ENCODE measurements at regions of chr4 and their contacts with region 1.

Region 1: GRCh38 chr4:113394730-113395530 is 345.5 kb downstream of the ANK2 start:
- DNase-seq: peak; percentile 80
- ATAC-seq: peak; percentile 75
- H3K4me3 ChIP-seq: no peak overlapping the region
- H3K4me3 Mint-ChIP-seq: no peak overlapping the region
- H3K27ac ChIP-seq: no peak overlapping the region
- H3K27ac Mint-ChIP-seq: no peak overlapping the region
- H3K4me1 ChIP-seq: no peaks in the 10 kb centered on the region
- H3K4me1 Mint-ChIP-seq: peaks cover 2% of the 10 kb centered on the region
- H3K27me3 ChIP-seq: no peaks in the 10 kb centered on the region
- H3K27me3 Mint-ChIP-seq: no peaks in the 10 kb centered on the region
- CTCF ChIP-seq: peak; percentile 94

Region 2: DNA sequence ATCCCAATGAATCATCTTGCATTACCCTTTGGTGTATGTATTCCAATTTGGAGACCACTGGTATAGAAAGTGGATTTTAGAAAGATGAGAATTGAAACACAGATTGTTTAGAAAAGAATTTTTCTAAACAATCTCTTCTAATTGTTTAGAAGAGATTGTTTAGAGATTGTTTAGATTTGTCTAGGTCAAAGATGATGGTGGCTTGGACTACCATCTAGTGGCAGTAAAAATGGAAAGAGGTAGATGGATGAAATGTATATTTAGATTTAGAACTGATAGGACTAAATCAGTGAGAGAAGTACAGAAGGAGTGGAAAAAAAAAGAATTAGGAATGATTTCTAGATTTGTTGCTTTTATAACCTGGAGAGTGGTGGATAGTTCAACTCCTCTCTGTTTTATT is 513.9 kb after region 1 on chr4:
- CTCF ChIA-PET with region 1: interaction called, 9 read pairs
- POLR2A ChIA-PET with region 1: no interaction called
- intact Hi-C with region 1: loop called (anchors 1 kb)
- DNase-seq: peak; percentile 9
- ATAC-seq: no peak
- H3K4me3 ChIP-seq: no peak overlapping the region
- H3K4me3 Mint-ChIP-seq: no peak overlapping the region
- H3K27ac ChIP-seq: no peak overlapping the region
- H3K27ac Mint-ChIP-seq: no peak overlapping the region
- H3K4me1 ChIP-seq: no peaks in the 10 kb centered on the region
- H3K4me1 Mint-ChIP-seq: no peaks in the 10 kb centered on the region
- H3K27me3 ChIP-seq: no peaks in the 10 kb centered on the region
- H3K27me3 Mint-ChIP-seq: peaks cover 3% of the 10 kb centered on the region
- CTCF ChIP-seq: peak; percentile 18

Region 3: DNA sequence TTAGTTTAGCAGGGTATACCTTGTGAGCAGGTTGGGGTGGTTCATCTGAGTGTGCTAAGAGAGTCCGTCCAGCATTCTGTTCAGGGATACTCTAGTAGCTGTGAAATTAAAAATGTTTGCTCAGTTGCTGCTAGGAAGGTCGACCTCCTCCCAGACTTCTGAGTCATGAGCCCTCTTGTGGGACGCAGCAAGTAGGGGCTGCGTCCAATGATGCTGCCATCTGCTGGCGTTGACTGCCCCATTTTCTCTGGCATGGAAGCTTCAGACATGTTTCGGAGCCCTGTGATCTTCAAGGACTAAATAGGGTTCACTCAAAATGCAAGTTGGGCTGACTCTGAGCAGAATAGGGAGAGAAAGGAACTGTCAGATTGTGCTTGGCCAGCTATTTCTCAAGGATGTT is 785.6 kb after region 1 on chr4:
- CTCF ChIA-PET with region 1: interaction called, 22 read pairs
- POLR2A ChIA-PET with region 1: no interaction called
- intact Hi-C with region 1: loop called (anchors 1 kb)
- DNase-seq: peak; percentile 39
- ATAC-seq: no peak
- H3K4me3 ChIP-seq: no peak overlapping the region
- H3K4me3 Mint-ChIP-seq: no peak overlapping the region
- H3K27ac ChIP-seq: no peak overlapping the region
- H3K27ac Mint-ChIP-seq: no peak overlapping the region
- H3K4me1 ChIP-seq: no peaks in the 10 kb centered on the region
- H3K4me1 Mint-ChIP-seq: no peaks in the 10 kb centered on the region
- H3K27me3 ChIP-seq: no peaks in the 10 kb centered on the region
- H3K27me3 Mint-ChIP-seq: peaks cover 7% of the 10 kb centered on the region
- CTCF ChIP-seq: peak; percentile 22

Region 4: DNA sequence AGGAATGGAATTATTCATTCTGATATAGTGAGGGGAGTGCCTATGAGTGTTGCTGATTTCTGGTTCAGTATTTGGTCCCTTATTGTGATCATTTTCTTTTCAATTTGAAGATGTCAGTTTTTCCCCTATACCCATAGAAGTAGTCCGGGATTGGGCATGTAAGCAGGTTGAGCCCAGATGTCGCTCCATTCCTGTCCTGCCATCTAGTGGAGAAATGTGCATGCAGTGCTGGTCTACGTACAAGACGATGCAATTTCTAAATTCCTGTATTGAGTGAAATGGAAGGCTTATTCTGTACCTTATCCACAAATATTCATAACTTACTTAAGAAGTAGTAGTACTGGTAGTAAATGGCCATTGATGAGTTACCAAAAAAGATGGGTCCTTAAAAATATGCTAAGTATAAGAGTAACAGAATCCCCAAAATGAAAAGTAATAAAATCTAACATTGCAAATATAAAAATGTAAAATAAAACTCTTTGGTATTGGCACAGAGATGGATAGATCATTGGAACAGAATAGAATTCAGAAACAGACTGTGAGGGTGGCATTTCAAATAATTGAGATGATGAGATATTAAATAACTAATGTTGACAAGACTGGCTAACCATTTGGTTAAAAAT is 1264.6 kb after region 1 on chr4:
- CTCF ChIA-PET with region 1: interaction called, 6 read pairs
- POLR2A ChIA-PET with region 1: no interaction called
- intact Hi-C with region 1: loop called (anchors 1 kb)
- DNase-seq: peak; percentile 78
- ATAC-seq: peak; percentile 88
- H3K4me3 ChIP-seq: no peak overlapping the region
- H3K4me3 Mint-ChIP-seq: no peak overlapping the region
- H3K27ac ChIP-seq: no peak overlapping the region
- H3K27ac Mint-ChIP-seq: no peak overlapping the region
- H3K4me1 ChIP-seq: no peaks in the 10 kb centered on the region
- H3K4me1 Mint-ChIP-seq: peaks cover 17% of the 10 kb centered on the region
- H3K27me3 ChIP-seq: no peaks in the 10 kb centered on the region
- H3K27me3 Mint-ChIP-seq: no peaks in the 10 kb centered on the region
- CTCF ChIP-seq: peak; percentile 91

Region 5: DNA sequence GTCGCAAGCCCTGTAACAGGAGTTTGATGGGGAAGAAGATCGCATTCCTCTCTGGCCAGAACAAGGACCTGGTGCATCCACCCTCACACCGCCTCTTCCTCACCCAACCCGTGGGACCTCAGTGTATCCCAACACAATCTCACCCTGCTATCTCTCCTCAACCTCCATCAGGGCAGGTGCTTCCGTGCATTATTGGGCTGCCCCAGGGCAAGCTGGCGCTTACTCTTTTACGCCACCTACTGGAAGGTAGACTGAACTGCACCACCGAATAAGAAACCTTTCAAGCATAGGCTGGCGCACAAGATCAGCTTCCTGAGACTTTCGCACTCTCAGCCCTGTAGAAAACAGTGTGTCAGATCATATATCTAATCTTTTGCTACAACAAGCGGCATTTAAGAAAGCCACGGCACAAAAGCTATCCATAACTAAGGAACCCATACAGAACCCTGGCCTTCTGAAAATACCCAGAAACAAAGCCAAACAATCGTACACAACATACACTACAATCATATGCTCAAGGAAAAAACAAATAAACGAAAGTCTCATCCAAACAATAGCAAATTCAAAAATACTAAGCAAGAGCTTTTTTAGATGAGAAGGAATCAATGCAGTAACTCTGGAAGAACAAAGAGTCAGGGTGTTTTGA is 1413.0 kb after region 1 on chr4:
- CTCF ChIA-PET with region 1: interaction called, 4 read pairs
- POLR2A ChIA-PET with region 1: no interaction called
- intact Hi-C with region 1: loop called (anchors 10 kb)
- DNase-seq: peak; percentile 58
- ATAC-seq: peak; percentile 89
- H3K4me3 ChIP-seq: no peak overlapping the region
- H3K4me3 Mint-ChIP-seq: no peak overlapping the region
- H3K27ac ChIP-seq: no peak overlapping the region
- H3K27ac Mint-ChIP-seq: no peak overlapping the region
- H3K4me1 ChIP-seq: no peaks in the 10 kb centered on the region
- H3K4me1 Mint-ChIP-seq: no peaks in the 10 kb centered on the region
- H3K27me3 ChIP-seq: no peaks in the 10 kb centered on the region
- H3K27me3 Mint-ChIP-seq: peaks cover 7% of the 10 kb centered on the region
- CTCF ChIP-seq: peak; percentile 93